Dendritic cell treated with granulocyte-macrophage colony-stimulating factor and Interleukin-4, amounts not matched to agents 40 ng/mL and 50 ng/mL, for 4 days (primary cell): ENCODE measurements at regions of chr14 and their contacts with region 1.

Region 1: DNA sequence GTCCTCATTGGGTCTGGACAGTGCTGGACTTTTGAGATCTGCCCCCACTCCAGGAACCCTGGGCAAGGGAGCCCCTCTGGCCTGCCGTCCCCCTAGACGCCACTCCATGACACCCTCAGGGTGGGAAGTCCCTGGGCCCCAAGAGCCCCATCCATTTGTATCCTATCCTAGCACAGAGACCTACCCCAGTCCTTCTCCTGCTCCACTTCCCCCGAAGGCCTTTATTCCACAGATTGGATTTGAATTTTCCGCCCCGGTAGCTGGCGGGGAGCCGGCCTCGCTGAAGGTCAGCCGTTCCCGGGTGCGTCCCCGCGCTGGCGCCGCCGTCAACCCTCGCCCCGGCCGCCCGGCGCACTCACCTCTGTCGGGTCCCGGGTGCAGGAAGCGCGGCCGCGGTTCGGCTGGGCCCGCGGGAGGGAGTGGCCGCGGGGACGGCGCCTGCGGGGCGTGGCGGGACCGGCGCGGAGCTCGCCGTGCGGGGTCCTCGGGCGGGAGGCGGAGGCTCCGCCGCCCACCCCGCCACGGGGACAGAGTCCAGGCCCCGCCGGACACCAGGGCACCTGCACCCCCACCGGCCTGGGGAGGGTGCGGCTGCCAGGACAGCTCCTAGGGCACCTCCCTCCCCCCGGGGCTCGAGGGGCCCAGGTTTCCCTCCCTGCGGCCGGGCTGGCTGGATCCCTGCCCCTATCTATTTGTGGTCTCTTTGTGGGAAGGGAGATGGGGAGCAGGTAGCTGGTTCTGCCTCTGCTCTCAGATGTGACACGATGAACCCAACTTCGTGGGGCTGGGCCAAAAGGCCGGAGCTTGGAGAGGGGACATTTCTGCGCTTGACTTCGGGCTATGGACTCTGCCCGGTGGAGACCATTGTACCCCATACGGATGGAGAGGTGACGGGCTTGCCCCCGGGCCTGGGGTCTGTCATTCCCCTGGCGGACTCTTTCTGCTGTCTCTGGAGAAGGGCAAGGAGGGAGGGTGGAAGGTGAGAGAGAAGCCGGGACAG is 19.9 kb upstream of the GPR68 start:
- H3K4me3 Mint-ChIP-seq: peak overlapping the region; percentile 65
- H3K27ac Mint-ChIP-seq: peak overlapping the region; percentile 28
- H3K4me1 Mint-ChIP-seq: peaks cover 23% of the 10 kb centered on the region
- H3K27me3 Mint-ChIP-seq: peaks cover 40% of the 10 kb centered on the region

Region 2: GRCh38 chr14:91164685-91165084 is 99.8 kb before region 1 on chr14:
- intact Hi-C with region 1: no loop called
- H3K4me3 Mint-ChIP-seq: no peak overlapping the region
- H3K27ac Mint-ChIP-seq: no peak overlapping the region
- H3K4me1 Mint-ChIP-seq: no peaks in the 10 kb centered on the region
- H3K27me3 Mint-ChIP-seq: no peaks in the 10 kb centered on the region

Region 3: DNA sequence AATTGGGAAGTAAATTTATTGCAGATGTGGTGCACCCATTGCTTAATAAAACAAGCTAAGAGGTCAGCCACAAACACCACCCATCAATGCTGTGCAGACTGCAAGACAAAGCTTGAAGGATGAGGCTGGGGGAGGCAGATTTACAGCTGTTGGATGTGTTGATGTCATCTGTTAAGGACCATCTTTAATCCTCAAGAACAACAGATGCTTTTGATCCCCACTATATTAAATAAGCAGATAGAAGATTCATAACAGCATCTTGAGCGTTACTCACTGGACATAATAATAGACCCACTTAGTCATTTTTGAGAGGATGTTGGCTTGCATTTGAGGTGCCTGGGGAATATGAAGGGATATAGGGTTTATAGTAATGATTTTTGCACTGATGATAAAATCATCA is 78.7 kb before region 1 on chr14:
- intact Hi-C with region 1: no loop called
- H3K4me3 Mint-ChIP-seq: no peak overlapping the region
- H3K27ac Mint-ChIP-seq: no peak overlapping the region
- H3K4me1 Mint-ChIP-seq: peaks cover 6% of the 10 kb centered on the region
- H3K27me3 Mint-ChIP-seq: no peaks in the 10 kb centered on the region

Region 4: DNA sequence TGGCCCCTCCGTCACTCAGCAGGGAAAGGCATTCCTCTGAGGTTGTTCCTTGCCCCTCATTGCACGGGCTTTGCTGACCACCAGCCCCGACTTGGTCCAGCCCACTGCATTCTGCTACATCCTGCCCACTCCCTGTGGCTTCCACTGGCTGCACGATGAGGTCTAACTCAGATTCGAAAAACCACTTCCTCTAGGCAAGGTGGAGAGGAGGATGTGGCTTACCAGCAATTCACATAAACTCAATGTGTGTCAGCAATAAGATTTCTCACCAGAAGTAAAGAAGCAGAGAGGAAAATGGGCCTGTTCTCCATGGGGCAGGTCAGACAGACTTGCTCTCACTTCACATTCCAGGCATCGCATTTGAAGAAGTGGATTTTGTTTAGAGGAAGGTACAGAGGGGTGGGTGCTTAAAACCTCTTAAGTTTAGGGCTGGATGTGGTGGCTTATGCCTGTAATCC is 34.7 kb before region 1 on chr14:
- intact Hi-C with region 1: loop called (anchors 5 kb)
- H3K4me3 Mint-ChIP-seq: no peak overlapping the region
- H3K27ac Mint-ChIP-seq: peak overlapping the region; percentile 71
- H3K4me1 Mint-ChIP-seq: peaks cover 97% of the 10 kb centered on the region
- H3K27me3 Mint-ChIP-seq: peaks cover 2% of the 10 kb centered on the region